ENCODE measurements at regions of chr1 and their contacts with region 1.

Region 1: GRCh38 chr1:33127001-33127791 is 46.2 kb downstream of the AZIN2 start:
- DNase-seq: peak; percentile 97 to 99 (median 99)
- H3K4me3 ChIP-seq: peak overlapping the region; percentile 94
- H3K4me3 Mint-ChIP-seq: peak overlapping the region; percentile 89 to 97 (median 95)
- H3K27ac ChIP-seq: peak overlapping the region; percentile 78
- H3K27ac Mint-ChIP-seq: peak overlapping the region; percentile 92 to 98 (median 96)
- H3K4me1 ChIP-seq: peaks cover 39% of the 10 kb centered on the region
- H3K4me1 Mint-ChIP-seq: peaks cover 52 to 64% (median 61%) of the 10 kb centered on the region in 3 donors
- H3K27me3 ChIP-seq: no peaks in the 10 kb centered on the region
- H3K27me3 Mint-ChIP-seq: peaks cover 0 to 2% of the 10 kb centered on the region in 2 donors

Region 2: GRCh38 chr1:32964461-32965250 is 162.5 kb before region 1 on chr1 and contains the start of gene RNF19B:
- CTCF ChIA-PET with region 1: interaction called, 4 read pairs
- POLR2A ChIA-PET with region 1: interaction called, 19 read pairs
- DNase-seq: peak; percentile 89 to 96 (median 92)
- H3K4me3 ChIP-seq: peak within 1 kb of the TSS; percentile 78
- H3K4me3 Mint-ChIP-seq: peak within 1 kb of the TSS; percentile 85 to 96 (median 89)
- H3K27ac ChIP-seq: peak within 1 kb of the TSS; percentile 58
- H3K27ac Mint-ChIP-seq: peak within 1 kb of the TSS; percentile 84 to 98 (median 93)
- H3K4me1 ChIP-seq: peaks cover 21% of the 10 kb centered on the region
- H3K4me1 Mint-ChIP-seq: peaks cover 34 to 45% (median 44%) of the 10 kb centered on the region in 3 donors
- H3K27me3 ChIP-seq: no peaks in the 10 kb centered on the region
- H3K27me3 Mint-ChIP-seq: peaks cover 4 to 5% of the 10 kb centered on the region in 2 donors
- total RNA-seq, gene RNF19B: 39.6 to 39.9 TPM

Region 3: GRCh38 chr1:33080885-33081553 is 46.2 kb before region 1 on chr1 and contains the start of gene AZIN2:
- CTCF ChIA-PET with region 1: interaction called, 14 read pairs
- POLR2A ChIA-PET with region 1: interaction called, 17 read pairs
- DNase-seq: peak; percentile 93 to 99 (median 97)
- H3K4me3 ChIP-seq: peak within 1 kb of the TSS; percentile 71
- H3K4me3 Mint-ChIP-seq: peak within 1 kb of the TSS; percentile 82 to 93 (median 87)
- H3K27ac ChIP-seq: peak within 1 kb of the TSS; percentile 35
- H3K27ac Mint-ChIP-seq: peak within 1 kb of the TSS; percentile 38 to 98 (median 84)
- H3K4me1 ChIP-seq: peaks cover 15% of the 10 kb centered on the region
- H3K4me1 Mint-ChIP-seq: peaks cover 17 to 37% (median 28%) of the 10 kb centered on the region in 3 donors
- H3K27me3 ChIP-seq: no peaks in the 10 kb centered on the region
- H3K27me3 Mint-ChIP-seq: peaks cover 0 to 4% of the 10 kb centered on the region in 2 donors
- total RNA-seq, gene AZIN2: 2.1 to 2.5 TPM

Region 4: DNA sequence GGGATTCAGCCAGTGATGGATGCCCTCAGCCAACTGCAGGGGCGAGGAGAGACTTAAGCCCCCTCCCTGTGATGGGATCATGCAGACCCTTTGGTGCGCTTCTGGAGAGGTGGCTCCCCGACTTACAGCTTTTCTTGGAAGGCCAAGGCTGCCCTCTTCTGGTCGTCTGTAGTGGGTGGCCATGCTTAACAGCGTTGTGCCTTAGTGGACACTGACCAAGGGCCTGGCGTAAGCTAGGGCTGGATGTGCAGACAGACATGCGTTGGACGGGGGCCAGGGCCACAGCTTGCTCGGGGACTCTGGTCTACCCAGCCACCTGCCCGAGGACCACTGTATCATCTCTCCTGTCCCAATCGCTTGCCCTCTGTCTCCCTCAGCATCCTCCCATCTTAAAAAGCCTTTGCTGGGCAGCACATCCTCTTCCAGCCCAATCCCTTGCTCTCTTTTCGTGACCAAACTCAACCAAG is 40.8 kb before region 1 on chr1:
- CTCF ChIA-PET with region 1: interaction called, 14 read pairs
- POLR2A ChIA-PET with region 1: interaction called, 17 read pairs
- DNase-seq: peak in 2 of 5 donors; percentile 11 to 58
- H3K4me3 ChIP-seq: no peak overlapping the region
- H3K4me3 Mint-ChIP-seq: peak overlapping the region in 1 of 7 donors; percentile 32
- H3K27ac ChIP-seq: no peak overlapping the region
- H3K27ac Mint-ChIP-seq: peak overlapping the region in 3 of 8 donors; percentile 30 to 78 (median 34)
- H3K4me1 ChIP-seq: peaks cover 22% of the 10 kb centered on the region
- H3K4me1 Mint-ChIP-seq: peaks cover 24 to 53% (median 39%) of the 10 kb centered on the region in 3 donors
- H3K27me3 ChIP-seq: no peaks in the 10 kb centered on the region
- H3K27me3 Mint-ChIP-seq: no peaks in the 10 kb centered on the region

Region 5: DNA sequence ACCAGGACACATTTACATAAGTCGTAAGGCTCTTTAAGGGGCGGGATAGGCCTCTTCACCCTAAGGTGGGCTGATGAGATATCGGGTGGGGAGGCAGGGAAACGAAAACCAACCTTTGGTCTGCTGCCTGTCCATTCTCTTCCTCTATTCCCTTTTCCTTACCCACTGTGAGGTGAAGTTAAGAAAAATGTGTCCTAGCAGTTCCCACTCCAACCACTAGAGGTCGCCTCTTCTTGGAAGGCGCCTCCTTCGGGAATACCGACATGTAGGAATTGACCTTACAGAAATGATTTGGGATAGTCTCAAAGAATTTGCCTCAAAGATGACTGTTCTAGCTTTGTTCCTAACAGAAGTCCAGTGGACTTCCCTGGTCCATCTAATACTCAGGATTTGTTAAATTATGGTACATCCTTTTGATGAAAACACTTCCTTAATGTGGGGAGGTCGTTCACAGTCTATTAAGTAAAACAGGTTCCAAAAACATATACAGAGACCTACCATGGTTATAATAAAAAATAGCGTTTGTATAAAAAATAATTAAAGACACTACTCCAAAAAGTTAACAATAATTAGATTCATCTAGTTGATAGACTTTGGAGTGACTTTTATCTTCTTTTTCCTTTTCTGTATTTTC is 32.1 kb before region 1 on chr1:
- CTCF ChIA-PET with region 1: interaction called, 23 read pairs
- POLR2A ChIA-PET with region 1: interaction called, 14 read pairs
- DNase-seq: peak in 3 of 5 donors; percentile 10 to 57 (median 23)
- H3K4me3 ChIP-seq: no peak overlapping the region
- H3K4me3 Mint-ChIP-seq: no peak overlapping the region
- H3K27ac ChIP-seq: no peak overlapping the region
- H3K27ac Mint-ChIP-seq: no peak overlapping the region
- H3K4me1 ChIP-seq: peaks cover 35% of the 10 kb centered on the region
- H3K4me1 Mint-ChIP-seq: peaks cover 40 to 53% (median 46%) of the 10 kb centered on the region in 3 donors
- H3K27me3 ChIP-seq: no peaks in the 10 kb centered on the region
- H3K27me3 Mint-ChIP-seq: no peaks in the 10 kb centered on the region

Region 6: DNA sequence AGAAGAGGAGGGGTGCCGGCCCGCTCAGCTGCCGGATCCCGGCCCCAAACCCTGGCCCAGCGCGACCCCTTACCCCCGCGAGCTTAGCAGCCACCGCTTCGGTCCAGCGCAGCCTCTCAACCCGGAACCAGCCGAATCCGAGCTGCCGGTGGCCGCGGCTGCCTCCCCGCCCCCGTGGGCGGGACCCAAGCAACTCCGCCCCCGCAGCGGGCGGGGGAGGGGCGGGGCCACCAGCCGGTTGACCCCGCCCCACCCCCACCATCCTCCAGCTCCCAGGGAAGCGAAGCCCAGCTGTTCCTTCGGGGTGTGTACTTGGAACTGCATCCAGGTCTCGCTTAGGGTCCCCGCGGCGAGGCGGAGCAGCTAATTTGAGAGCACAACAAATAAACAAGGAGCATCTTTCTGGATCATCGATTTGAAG is 54.7 kb after region 1 on chr1 and contains the start of gene TRIM62:
- CTCF ChIA-PET with region 1: interaction called, 19 read pairs
- POLR2A ChIA-PET with region 1: interaction called, 40 read pairs
- DNase-seq: peak; percentile 72 to 84 (median 72)
- H3K4me3 ChIP-seq: peak within 1 kb of the TSS; percentile 83
- H3K4me3 Mint-ChIP-seq: peak within 1 kb of the TSS; percentile 81 to 95 (median 88)
- H3K27ac ChIP-seq: no peak within 1 kb of the TSS
- H3K27ac Mint-ChIP-seq: peak within 1 kb of the TSS; percentile 31 to 95 (median 82)
- H3K4me1 ChIP-seq: peaks cover 14% of the 10 kb centered on the region
- H3K4me1 Mint-ChIP-seq: peaks cover 34 to 42% (median 38%) of the 10 kb centered on the region in 3 donors
- H3K27me3 ChIP-seq: peaks cover 4% of the 10 kb centered on the region
- H3K27me3 Mint-ChIP-seq: peaks cover 0 to 15% of the 10 kb centered on the region in 2 donors
- total RNA-seq, gene TRIM62: 5.0 to 5.5 TPM

Measured in CD8-positive, alpha-beta memory T cell (primary cell).